Breast epithelium (tissue), 4 donors: ENCODE measurements at regions of chr20 and their contacts with region 1.

Region 1: DNA sequence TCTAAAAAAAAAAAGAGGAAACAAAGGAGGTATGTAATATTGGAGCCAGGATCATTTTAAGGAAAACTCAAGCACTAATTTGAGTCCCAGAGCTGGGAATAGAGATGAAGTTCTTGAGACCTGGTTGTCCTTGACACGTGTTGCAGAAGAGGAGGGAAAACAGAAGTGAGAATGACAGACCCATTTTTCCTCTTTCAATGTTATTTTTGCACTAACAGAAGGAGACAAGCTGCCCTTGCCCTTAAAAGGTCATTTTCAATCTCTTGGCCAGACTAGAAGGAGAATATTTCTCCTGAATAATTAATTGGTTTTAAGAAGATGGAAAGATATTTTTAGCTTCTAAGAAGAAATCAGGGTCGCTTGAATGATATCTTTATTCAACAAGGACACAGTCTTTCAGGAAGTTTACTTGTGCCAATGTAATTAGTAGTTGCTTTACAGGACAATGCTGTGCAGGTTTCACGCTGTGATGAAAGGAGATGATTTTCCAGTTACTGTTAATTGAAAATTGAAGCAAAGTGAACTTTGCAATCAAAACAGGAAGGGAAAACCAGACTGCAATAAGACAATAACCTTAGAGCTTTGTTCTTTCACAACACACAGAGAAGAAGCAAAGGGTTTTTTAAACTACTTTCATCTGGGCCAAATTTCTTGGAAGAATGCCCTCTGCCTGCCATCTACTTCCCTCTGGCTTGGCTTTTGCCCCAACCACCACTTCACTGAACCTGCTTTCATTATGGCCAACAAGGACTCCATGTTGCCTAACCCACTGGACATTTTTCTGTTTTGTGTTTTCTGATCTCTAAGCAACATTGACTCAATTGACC is 107.8 kb upstream of the SHLD1 start:
- DNase-seq: peak in 1 of 2 donors; percentile 76
- H3K4me3 ChIP-seq: no peak overlapping the region
- H3K27ac ChIP-seq: peak overlapping the region; percentile 74 to 75
- H3K4me1 ChIP-seq: no peaks in the 10 kb centered on the region
- H3K27me3 ChIP-seq: no peaks in the 10 kb centered on the region
- CTCF ChIP-seq: no peak
- POLR2A ChIP-seq: no peak

Region 2: GRCh38 chr20:4318891-4319290 is 1323.5 kb before region 1 on chr20:
- intact Hi-C with region 1: loop called (anchors 10 kb)
- DNase-seq: no peak
- H3K4me3 ChIP-seq: no peak overlapping the region
- H3K27ac ChIP-seq: no peak overlapping the region
- H3K4me1 ChIP-seq: no peaks in the 10 kb centered on the region
- H3K27me3 ChIP-seq: no peaks in the 10 kb centered on the region
- CTCF ChIP-seq: no peak
- POLR2A ChIP-seq: no peak

Region 3: GRCh38 chr20:6700563-6701329 is 1058.4 kb after region 1 on chr20:
- intact Hi-C with region 1: no loop called
- DNase-seq: no peak
- H3K4me3 ChIP-seq: no peak overlapping the region
- H3K27ac ChIP-seq: peak overlapping the region in 1 of 2 donors; percentile 26
- H3K4me1 ChIP-seq: no peaks in the 10 kb centered on the region
- H3K27me3 ChIP-seq: no peaks in the 10 kb centered on the region
- CTCF ChIP-seq: no peak
- POLR2A ChIP-seq: no peak